ENCODE measurements at regions of chr15 and their contacts with region 1.

Region 1: DNA sequence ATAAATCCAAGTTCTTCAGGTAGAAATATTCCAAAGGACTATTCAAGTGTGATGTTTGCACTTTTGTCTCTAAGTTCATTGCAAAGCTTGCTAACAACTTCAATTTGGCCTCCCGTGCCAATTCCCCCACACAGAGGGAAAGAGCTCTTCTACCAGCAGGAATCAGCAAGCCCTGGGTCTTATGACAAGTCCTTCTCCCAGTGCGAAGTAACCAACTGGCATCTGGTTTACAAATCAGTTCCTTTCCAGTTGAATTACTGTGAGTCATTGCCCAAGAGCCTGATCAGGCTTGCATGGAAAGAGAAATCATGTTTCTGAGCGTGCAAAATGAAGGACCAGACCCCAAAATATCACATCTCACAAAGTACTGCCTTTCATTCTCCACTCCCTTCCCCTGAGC is 62.7 kb upstream of the SLCO3A1 start:
- H3K4me3 Mint-ChIP-seq: no peak overlapping the region
- H3K27ac Mint-ChIP-seq: no peak overlapping the region
- H3K4me1 Mint-ChIP-seq: no peaks in the 10 kb centered on the region
- H3K27me3 Mint-ChIP-seq: peaks cover 1% of the 10 kb centered on the region

Region 2: GRCh38 chr15:91472316-91472756 is 318.5 kb before region 1 on chr15:
- intact Hi-C with region 1: no loop called
- H3K4me3 Mint-ChIP-seq: no peak overlapping the region
- H3K27ac Mint-ChIP-seq: no peak overlapping the region
- H3K4me1 Mint-ChIP-seq: peaks cover 29% of the 10 kb centered on the region
- H3K27me3 Mint-ChIP-seq: peaks cover 2% of the 10 kb centered on the region

Region 3: DNA sequence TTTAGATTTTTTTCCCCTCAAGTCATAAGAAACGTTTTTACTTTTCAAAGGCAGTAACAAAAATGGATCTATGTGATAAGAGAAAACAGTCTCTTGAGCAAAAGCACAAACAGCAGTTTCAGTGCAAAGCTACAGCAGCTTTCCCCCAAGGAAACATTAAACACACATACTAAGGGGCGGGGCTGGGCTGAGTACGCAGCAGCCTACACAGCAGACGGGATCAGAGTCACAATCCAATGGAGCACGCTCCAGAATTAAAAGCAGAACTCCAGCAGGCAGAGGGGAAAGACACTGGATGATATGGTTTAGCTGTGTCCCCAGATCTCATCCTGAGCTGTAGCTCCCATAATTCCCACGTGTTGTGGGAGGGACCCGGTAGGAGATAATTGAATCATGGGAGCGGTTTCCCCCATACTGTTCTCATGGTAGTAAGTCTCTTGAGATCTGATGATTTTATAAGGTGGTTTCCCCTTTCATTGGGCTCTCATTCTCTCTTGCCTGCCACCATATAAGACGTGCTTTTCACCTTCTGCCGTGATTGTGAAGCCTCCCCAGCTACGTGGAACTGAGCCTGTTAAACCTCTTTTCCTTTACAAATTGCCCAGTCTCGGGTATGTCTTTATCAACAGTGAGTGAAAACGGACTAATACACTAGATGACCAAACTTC is 53.6 kb before region 1 on chr15:
- intact Hi-C with region 1: loop called (anchors 10 kb)
- H3K4me3 Mint-ChIP-seq: no peak overlapping the region
- H3K27ac Mint-ChIP-seq: no peak overlapping the region
- H3K4me1 Mint-ChIP-seq: no peaks in the 10 kb centered on the region
- H3K27me3 Mint-ChIP-seq: peaks cover 8% of the 10 kb centered on the region

Region 4: GRCh38 chr15:92059056-92059960 is 268.5 kb after region 1 on chr15:
- intact Hi-C with region 1: no loop called
- H3K4me3 Mint-ChIP-seq: no peak overlapping the region
- H3K27ac Mint-ChIP-seq: no peak overlapping the region
- H3K4me1 Mint-ChIP-seq: peaks cover 62% of the 10 kb centered on the region
- H3K27me3 Mint-ChIP-seq: no peaks in the 10 kb centered on the region

Measured in dendritic cell treated with granulocyte-macrophage colony-stimulating factor and Interleukin-4, amounts not matched to agents 40 ng/mL and 50 ng/mL, for 4 days (primary cell).